Activated T-helper 1 cell treated with anti-CD3 and anti-CD28 coated beads, Interleukin-12 subunit alpha, Interleukin-12 subunit beta, Interleukin-2, Interleukin-4 antibody, amounts not matched to agents 30 ng/mL and 10 ng/mL and 1 ng/mL, durations not matched to agents 14 hours and 24 hours and 36 hours (primary cell): ENCODE measurements at regions of chr6 and their contacts with region 1.

Region 1: GRCh38 chr6:1609648-1610496 is at the start of gene FOXC1:
- DNase-seq: peak; percentile 34
- H3K4me3 Mint-ChIP-seq: peak within 1 kb of the TSS; percentile 70
- H3K27ac Mint-ChIP-seq: peak within 1 kb of the TSS; percentile 79
- H3K4me1 Mint-ChIP-seq: peaks cover 25% of the 10 kb centered on the region
- H3K27me3 Mint-ChIP-seq: peaks cover 62% of the 10 kb centered on the region
- total RNA-seq, gene FOXC1: 0.23 and 0.44 TPM in 2 replicates

Region 2: GRCh38 chr6:1311400-1312202 is 298.3 kb before region 1 on chr6 and contains the start of gene FOXQ1:
- intact Hi-C with region 1: loop called (anchors 5 kb)
- DNase-seq: no peak
- H3K4me3 Mint-ChIP-seq: peak within 1 kb of the TSS; percentile 53
- H3K27ac Mint-ChIP-seq: peak within 1 kb of the TSS; percentile 84
- H3K4me1 Mint-ChIP-seq: peaks cover 28% of the 10 kb centered on the region
- H3K27me3 Mint-ChIP-seq: peaks cover 69% of the 10 kb centered on the region
- total RNA-seq, gene FOXQ1: not detected in 2 replicates

Region 3: DNA sequence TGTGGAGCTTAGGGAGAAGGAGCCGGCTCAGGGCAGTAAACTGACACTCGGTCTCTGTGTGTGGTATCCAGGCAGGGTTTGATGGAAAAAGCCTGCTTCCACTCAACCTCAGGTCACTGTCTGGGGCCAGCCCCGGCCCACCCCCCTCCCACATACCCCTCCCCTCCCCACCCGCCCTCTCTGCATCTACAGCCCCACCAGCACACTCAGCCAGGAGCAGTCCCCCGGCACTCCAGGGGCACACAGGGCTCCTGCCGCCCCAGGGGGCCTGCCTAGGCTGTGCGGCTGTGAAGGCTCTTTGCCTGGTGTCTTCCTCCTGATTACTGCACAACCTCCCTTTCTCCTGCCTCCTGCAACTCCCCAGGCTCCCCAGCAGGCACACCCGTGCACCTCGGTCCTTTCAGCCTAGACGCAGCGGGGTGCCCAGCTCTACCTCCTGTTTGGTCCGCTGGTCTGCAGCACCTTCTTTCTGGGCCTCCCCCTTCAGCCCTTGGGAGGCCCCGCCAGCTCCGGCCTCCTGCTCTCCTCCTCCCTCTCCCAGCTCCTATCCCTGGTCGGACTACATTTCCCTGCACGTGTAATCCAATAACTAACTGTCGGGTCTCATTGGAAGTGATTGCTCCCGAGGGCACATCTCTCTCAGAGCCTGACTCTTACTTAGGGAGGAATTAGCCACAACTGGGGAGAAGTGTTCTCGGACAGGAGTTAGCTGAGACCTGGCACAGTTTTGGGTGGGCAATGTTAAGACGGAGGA is 221.8 kb before region 1 on chr6:
- intact Hi-C with region 1: loop called (anchors 2 kb)
- DNase-seq: no peak
- H3K4me3 Mint-ChIP-seq: no peak overlapping the region
- H3K27ac Mint-ChIP-seq: no peak overlapping the region
- H3K4me1 Mint-ChIP-seq: peaks cover 8% of the 10 kb centered on the region
- H3K27me3 Mint-ChIP-seq: peaks cover 71% of the 10 kb centered on the region

Region 4: DNA sequence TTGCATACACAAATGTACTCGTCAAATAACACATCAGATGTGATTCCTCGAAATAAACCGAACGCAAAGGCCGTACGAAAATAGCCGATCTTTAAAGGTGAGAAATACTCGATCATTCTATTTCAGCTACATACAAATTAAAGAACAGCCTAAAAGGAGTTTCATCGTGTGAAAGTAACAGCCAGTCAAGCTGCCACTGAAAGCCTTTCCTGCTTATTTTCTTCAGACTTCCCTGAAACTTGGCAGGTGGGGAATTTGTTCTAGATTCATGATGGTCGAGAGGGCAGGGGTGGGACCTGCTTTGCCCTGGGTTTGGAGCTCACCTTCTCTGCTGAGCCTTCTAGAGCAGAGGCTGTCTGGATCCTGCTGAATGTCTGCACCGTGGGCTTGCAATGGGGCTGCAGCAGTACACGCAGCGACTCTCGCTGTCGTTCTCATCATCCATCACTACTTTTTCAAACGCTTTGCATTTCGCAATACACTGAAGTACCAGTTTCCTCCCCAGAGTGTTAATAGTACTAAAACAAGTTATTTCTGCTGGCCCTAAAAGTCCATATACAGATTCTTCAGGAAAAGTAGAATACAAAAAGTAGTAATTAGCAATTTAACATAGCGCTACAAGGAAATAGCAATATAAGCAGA is 16.0 kb after region 1 on chr6:
- intact Hi-C with region 1: loop called (anchors 2 kb)
- DNase-seq: no peak
- H3K4me3 Mint-ChIP-seq: no peak overlapping the region
- H3K27ac Mint-ChIP-seq: no peak overlapping the region
- H3K4me1 Mint-ChIP-seq: peaks cover 9% of the 10 kb centered on the region
- H3K27me3 Mint-ChIP-seq: peaks cover 65% of the 10 kb centered on the region

Region 5: DNA sequence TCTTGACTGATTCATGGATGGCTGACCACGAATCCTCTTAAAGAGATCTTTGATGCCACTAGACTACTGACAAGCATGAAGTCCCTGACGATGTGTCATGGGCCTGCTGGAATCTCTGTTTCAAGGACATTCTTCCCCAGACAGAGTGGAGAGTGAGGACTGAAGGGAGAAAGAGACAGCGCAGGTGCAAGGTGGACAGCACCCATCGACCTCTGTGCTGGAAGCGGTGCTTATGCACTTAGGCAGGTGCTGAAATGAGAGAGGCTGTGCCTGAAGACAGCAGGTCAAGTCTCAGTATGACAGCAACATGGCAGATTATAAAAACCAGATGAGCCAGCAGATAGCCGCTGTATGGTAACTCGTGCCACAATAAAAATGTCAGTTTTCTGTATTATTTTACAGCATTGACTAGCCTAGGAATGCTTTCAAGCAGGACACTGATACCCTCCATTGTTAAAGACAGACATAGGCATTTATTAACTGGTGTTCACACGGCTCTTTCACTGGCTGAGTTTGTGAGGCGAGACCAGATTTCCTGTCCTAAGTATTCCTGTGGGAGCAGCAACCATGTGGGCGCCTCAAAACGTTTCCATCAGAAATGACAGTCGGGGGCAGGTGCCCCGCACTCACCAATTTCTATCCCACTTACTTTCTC is 47.4 kb after region 1 on chr6:
- intact Hi-C with region 1: no loop called
- DNase-seq: no peak
- H3K4me3 Mint-ChIP-seq: no peak overlapping the region
- H3K27ac Mint-ChIP-seq: no peak overlapping the region
- H3K4me1 Mint-ChIP-seq: no peaks in the 10 kb centered on the region
- H3K27me3 Mint-ChIP-seq: no peaks in the 10 kb centered on the region

Region 6: GRCh38 chr6:1856381-1856780 is 246.5 kb after region 1 on chr6:
- intact Hi-C with region 1: no loop called
- DNase-seq: no peak
- H3K4me3 Mint-ChIP-seq: no peak overlapping the region
- H3K27ac Mint-ChIP-seq: no peak overlapping the region
- H3K4me1 Mint-ChIP-seq: no peaks in the 10 kb centered on the region
- H3K27me3 Mint-ChIP-seq: no peaks in the 10 kb centered on the region